ENCODE measurements at regions of chr7 and their contacts with region 1.

Region 1: GRCh38 chr7:151271699-151272355 is 23.3 kb upstream of the SMARCD3 start:
- DNase-seq: peak in 1 of 2 donors; percentile 81
- H3K4me3 ChIP-seq: no peak overlapping the region
- H3K27ac ChIP-seq: peak overlapping the region; percentile 32 to 58
- H3K4me1 ChIP-seq: peaks cover 4 to 20% of the 10 kb centered on the region in 2 donors
- H3K27me3 ChIP-seq: no peaks in the 10 kb centered on the region
- CTCF ChIP-seq: no peak

Region 2: DNA sequence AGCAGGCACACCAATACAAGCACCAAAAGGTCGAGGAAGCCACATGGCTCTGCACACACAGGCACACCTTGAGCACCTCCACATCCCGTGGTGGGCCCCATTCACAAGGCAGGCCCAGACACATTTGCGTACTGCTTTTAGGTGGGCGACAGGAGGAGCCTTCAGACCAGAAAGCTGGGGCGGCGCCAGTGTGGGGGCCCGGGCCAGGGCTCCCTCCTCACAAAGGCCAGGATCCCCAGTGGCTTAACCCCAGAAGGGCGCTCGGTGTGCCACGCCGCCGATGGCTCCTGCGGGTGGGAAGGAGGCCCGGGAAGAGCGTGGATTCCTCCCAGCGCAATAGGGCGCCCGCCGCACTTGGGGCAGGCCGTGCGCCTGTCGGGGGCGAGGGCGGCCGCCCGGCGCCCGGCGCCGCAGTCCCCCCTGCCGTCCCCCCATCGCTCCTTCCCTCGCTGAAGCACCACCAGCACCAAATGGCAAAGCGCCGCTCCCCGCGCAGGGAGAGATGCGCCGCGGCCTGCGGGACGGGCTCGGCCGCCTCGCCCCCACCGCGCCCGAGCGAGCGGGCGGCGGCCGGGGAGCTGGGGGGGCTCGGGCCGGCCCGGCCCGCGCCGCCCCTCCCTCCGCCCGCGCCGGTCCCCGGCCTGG is 20.4 kb before region 1 on chr7:
- intact Hi-C with region 1: loop called (anchors 2 kb)
- DNase-seq: peak in 1 of 2 donors; percentile 81
- H3K4me3 ChIP-seq: peak overlapping the region; percentile 74 to 87
- H3K27ac ChIP-seq: peak overlapping the region; percentile 95 to 99
- H3K4me1 ChIP-seq: peaks cover 21 to 43% of the 10 kb centered on the region in 2 donors
- H3K27me3 ChIP-seq: no peaks in the 10 kb centered on the region
- CTCF ChIP-seq: no peak